Transverse colon (tissue), 4 donors: ENCODE measurements at regions of chr2 and their contacts with region 1.

Region 1: DNA sequence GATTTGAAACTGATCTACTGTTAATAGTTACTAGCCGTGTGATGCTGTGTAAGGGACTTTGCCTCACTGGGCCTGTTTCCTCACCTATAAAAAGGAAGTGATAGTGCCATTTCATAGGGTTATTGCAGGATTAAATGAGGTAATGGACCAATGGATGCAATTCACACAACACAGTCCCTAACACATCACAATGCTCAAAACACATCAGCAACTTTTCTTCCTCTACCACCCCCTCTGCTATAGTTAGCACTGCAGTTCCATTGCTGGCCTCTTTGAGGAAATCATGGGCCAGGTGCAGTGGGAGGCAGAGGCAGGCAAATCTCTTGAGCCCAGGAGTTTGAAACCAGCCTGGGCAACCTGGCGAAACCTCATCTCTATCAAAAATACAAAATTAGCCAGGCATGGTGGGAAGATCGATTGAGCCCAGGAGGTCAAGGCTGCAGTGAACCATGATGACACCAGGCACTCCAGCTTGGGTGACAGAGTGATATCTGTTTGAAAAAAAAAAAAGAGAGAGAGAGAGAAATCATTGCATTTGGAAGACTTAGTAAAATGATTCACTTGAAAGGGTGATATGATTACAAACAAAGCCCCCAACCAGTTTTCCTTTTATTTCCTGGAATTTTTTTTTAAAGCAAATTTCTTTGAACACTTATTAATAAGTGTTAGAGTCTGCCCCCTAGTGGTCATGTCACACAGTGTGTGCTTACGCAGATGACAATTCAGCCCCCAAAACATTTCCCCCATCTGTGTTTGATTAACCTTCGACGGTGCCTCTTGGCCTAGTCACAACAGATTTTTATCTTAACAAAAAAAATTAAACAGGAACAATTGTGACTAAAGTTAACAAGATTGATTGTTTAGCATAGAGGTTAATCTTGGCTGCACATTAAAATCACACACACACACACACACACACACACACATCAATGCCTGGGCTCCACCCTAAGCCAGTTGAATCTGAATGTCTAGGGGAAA is 88.6 kb upstream of the BCL11A start:
- DNase-seq: peak; percentile 13
- H3K4me3 ChIP-seq: no peak overlapping the region
- H3K27ac ChIP-seq: no peak overlapping the region
- H3K4me1 ChIP-seq: no peaks in the 10 kb centered on the region
- H3K27me3 ChIP-seq: no peaks in the 10 kb centered on the region
- CTCF ChIP-seq: peak; percentile 42 to 74 (median 63)
- EP300 ChIP-seq: no peak
- POLR2A ChIP-seq: no peak

Region 2: DNA sequence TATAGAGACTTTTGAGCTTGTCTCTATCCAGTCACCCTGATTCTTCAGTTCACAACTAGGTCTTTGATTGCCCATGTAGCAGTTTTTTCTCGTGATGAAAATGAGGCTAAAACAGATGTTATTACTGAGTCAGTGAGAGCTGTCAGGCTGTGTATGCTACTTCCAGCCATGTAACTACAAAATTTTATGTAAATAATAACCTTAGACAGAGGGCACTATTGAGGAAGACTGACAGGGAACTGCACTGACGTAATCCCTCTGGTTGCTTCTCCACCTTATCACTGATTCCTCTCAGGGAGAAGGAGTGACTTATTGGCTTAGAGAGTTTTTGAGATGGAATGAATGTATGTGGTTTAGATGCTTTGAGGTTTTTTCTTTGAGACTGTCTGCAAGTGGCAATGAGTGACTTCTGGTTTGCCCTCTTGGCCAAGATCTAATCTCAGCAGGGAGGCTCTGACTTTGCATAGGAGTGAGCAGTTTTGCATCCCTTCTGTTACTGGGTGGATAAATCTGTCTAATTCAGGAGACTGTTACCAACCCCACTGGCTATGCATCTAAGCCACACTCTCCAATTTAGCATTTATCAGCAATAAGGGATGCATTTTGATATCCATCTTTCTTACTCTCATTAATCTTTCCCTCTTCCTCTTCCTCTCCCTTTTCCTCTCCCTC is 1845.7 kb before region 1 on chr2:
- in situ Hi-C with region 1: no loop called
- intact Hi-C with region 1: loop called (anchors 10 kb)
- DNase-seq: no peak
- H3K4me3 ChIP-seq: no peak overlapping the region
- H3K27ac ChIP-seq: no peak overlapping the region
- H3K4me1 ChIP-seq: no peaks in the 10 kb centered on the region
- H3K27me3 ChIP-seq: no peaks in the 10 kb centered on the region
- CTCF ChIP-seq: no peak
- EP300 ChIP-seq: no peak
- POLR2A ChIP-seq: no peak

Region 3: GRCh38 chr2:61962095-61962984 is 1320.2 kb after region 1 on chr2:
- in situ Hi-C with region 1: no loop called
- intact Hi-C with region 1: no loop called
- DNase-seq: peak; percentile 40
- H3K4me3 ChIP-seq: no peak overlapping the region
- H3K27ac ChIP-seq: peak overlapping the region; percentile 64 to 84 (median 78)
- H3K4me1 ChIP-seq: peaks cover 6 to 43% (median 22%) of the 10 kb centered on the region in 4 donors
- H3K27me3 ChIP-seq: no peaks in the 10 kb centered on the region
- CTCF ChIP-seq: no peak
- EP300 ChIP-seq: no peak
- POLR2A ChIP-seq: no peak